Common myeloid progenitor, CD34-positive (primary cell): ENCODE measurements at regions of chr15 and their contacts with region 1.

Region 1: GRCh38 chr15:74857082-74857655 is 14.2 kb upstream of the ULK3 start:
- DNase-seq: peak in 1 of 3 donors; percentile 43
- H3K4me3 ChIP-seq: no peak overlapping the region
- H3K27ac ChIP-seq: peak overlapping the region in 1 of 2 experiments; percentile 2
- H3K4me1 ChIP-seq: peaks cover 2 to 38% (median 36%) of the 10 kb centered on the region in 4 experiments
- H3K27me3 ChIP-seq: no peaks in the 10 kb centered on the region

Region 2: DNA sequence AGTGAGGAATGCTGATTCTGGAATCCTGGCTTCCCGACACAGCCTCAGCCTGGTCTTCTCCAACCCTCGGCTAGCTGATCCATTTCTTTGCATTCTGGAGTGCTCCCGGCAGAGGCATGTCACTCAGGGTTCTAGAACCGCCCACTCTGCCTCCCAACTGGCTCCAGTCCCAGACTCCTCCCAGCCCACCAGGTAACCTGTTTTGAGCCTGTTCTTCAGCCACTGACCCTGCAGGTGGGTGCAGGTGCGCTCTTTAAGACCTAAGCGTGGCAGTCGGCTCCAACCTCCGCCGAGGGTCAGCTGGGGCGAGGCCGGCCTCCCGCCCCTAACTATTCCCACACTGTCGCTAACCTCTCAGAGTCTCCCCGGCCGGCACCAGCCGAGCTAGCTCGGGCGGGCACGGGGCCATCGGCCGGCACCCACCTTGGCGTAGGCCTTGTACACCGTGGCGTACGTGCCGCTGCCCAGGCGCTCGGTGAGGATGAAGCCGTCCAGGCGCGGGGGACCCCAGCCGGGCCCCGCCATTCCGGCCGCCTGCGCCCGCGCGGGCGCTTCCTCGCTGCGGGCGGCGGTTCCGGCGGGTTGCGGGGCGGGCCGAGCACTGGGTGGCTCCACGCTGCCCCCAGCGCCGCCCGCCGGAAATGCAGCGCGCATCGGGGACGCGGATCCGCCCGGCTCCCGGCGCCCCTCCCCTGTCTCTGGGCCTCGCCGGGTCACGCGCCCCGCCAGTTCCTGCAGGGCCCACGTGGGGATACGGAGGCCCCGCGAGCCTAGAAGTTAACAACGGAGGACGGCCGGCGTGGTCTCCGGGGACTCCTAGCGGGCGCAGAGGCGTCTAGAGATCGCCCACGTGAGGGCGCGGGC is 14.4 kb before region 1 on chr15 and contains the start of gene ULK3:
- CTCF ChIA-PET with region 1: interaction called, 30 read pairs
- POLR2A ChIA-PET with region 1: interaction called, 3 read pairs
- DNase-seq: peak; percentile 93 to 97 (median 96)
- H3K4me3 ChIP-seq: peak within 1 kb of the TSS; percentile 76 to 95 (median 81)
- H3K27ac ChIP-seq: peak within 1 kb of the TSS; percentile 46 to 80
- H3K4me1 ChIP-seq: peaks cover 0 to 47% (median 40%) of the 10 kb centered on the region in 4 experiments
- H3K27me3 ChIP-seq: no peaks in the 10 kb centered on the region

Region 3: GRCh38 chr15:74868059-74868458 is 10.9 kb after region 1 on chr15:
- CTCF ChIA-PET with region 1: interaction called, 35 read pairs
- POLR2A ChIA-PET with region 1: interaction called, 13 read pairs
- DNase-seq: peak; percentile 88 to 94 (median 92)
- H3K4me3 ChIP-seq: peak overlapping the region in 5 of 7 experiments; percentile 9 to 64 (median 43)
- H3K27ac ChIP-seq: peak overlapping the region; percentile 33 to 98
- H3K4me1 ChIP-seq: peaks cover 40 to 92% (median 88%) of the 10 kb centered on the region in 4 experiments
- H3K27me3 ChIP-seq: no peaks in the 10 kb centered on the region